ENCODE measurements at regions of chr4 and their contacts with region 1.

Region 1: GRCh38 chr4:118740869-118741268 is 55.7 kb downstream of the METTL14 start:
- DNase-seq: peak; percentile 4
- ATAC-seq: no peak
- H3K4me3 ChIP-seq: no peak overlapping the region
- H3K27ac ChIP-seq: no peak overlapping the region
- H3K4me1 ChIP-seq: no peaks in the 10 kb centered on the region
- H3K27me3 ChIP-seq: no peaks in the 10 kb centered on the region
- CTCF ChIP-seq: peak; percentile 9 to 50 (median 35); a peak in 2 of 6 replicates
- POLR2A ChIP-seq: no peak
- RAD21 ChIP-seq: peak; percentile 53; the same call in 1 of the 2 replicates

Region 2: GRCh38 chr4:118417325-118417724 is 323.5 kb before region 1 on chr4:
- CTCF ChIA-PET with region 1: no interaction called
- POLR2A ChIA-PET with region 1: no interaction called
- RAD21 ChIA-PET with region 1: no interaction called
- intact Hi-C with region 1: no loop called
- DNase-seq: no peak
- ATAC-seq: no peak
- H3K4me3 ChIP-seq: no peak overlapping the region
- H3K27ac ChIP-seq: no peak overlapping the region
- H3K4me1 ChIP-seq: no peaks in the 10 kb centered on the region
- H3K27me3 ChIP-seq: no peaks in the 10 kb centered on the region
- CTCF ChIP-seq: no peak
- POLR2A ChIP-seq: no peak
- RAD21 ChIP-seq: no peak

Region 3: DNA sequence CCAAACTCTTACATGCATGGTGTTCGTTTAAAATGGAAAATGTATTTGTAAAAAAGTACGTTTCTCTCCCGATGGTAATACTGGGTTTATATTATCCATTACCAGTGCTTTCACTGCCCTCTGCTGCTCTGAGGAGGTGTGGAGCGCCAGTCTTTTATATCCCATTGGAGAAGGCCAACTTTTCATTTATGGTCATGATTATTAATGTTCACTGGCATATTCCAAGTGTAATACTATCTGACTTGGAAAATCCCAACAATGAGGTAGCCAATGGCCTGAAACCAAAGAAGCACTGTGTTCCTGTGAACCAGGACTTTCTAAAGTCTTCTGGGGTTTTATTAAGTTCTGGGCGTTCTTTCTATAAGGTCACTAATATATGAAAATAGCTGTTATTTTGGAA is 228.5 kb after region 1 on chr4:
- CTCF ChIA-PET with region 1: no interaction called
- POLR2A ChIA-PET with region 1: no interaction called
- RAD21 ChIA-PET with region 1: interaction called in 1 of 2 experiments, 3 read pairs
- intact Hi-C with region 1: loop called (anchors 1 kb)
- DNase-seq: peak; percentile 32
- ATAC-seq: peak; percentile 98
- H3K4me3 ChIP-seq: no peak overlapping the region
- H3K27ac ChIP-seq: no peak overlapping the region
- H3K4me1 ChIP-seq: no peaks in the 10 kb centered on the region; a peak in 1 of 4 replicates
- H3K27me3 ChIP-seq: no peaks in the 10 kb centered on the region
- CTCF ChIP-seq: peak; percentile 56 to 81 (median 79)
- POLR2A ChIP-seq: no peak
- RAD21 ChIP-seq: peak; percentile 90

Measured in HCT116 (cell line).